IMR-90 (cell line): ENCODE measurements at regions of chr19 and their contacts with region 1.

Region 1: DNA sequence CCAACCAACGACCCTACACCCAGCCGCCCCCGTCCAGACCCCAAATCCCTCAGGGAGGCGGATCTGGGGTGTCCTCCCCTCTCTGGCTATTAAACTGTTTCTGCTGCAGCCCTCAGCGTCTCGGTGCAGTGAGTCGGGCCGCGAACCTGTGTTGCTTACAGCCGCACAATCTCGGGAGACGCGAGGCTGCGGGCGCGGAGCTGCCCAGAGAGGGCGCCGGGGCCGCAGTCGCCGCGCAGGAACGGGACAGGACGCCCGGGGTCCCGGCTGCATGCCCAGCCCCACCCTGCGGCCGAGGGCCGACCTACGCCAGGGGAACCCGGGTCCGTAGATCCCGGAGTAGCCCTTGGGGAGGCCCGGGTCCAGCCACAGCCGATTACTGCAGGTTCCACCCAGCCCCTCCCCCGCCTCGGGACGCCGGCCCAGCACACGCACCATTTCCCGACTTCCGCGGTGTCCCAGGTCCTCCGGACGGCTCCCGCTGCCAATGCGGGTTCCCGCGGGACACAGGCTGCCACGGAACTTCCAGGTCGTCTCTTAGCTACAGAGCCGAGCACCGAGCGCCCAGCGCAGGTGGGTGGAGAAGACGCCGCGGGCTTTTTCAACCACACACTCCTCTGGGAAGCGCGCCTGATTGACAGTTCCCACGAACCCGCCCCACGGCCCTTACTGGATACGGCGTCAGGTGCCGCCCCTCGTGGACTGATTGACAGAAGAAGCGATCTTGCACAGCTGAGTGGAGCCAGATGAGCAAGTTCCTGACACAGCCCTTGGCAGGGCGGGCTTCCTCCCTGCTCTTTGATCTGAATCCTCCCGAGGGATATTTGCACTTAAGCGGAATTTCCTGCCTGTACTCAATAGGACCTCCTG is at the start of gene ZNF799:
- DNase-seq: peak; percentile 95
- ATAC-seq: peak; percentile 97
- H3K4me3 ChIP-seq: peak within 1 kb of the TSS; percentile 97
- H3K27ac ChIP-seq: peak within 1 kb of the TSS; percentile 54
- H3K4me1 ChIP-seq: peaks cover 4% of the 10 kb centered on the region
- H3K27me3 ChIP-seq: no peaks in the 10 kb centered on the region
- CTCF ChIP-seq: 0 out of 2 replicates have a peak, but pooled peaks have one; percentile 3
- POLR2A ChIP-seq: no peak
- RAD21 ChIP-seq: no peak
- total RNA-seq, gene ZNF799: 3.4 and 3.6 TPM in 2 replicates

Region 2: GRCh38 chr19:12440541-12441316 is 39.9 kb after region 1 on chr19 and contains the start of gene ZNF443:
- CTCF ChIA-PET with region 1: no interaction called
- POLR2A ChIA-PET with region 1: no interaction called
- dilution Hi-C with region 1: no loop called
- in situ Hi-C with region 1: no loop called
- intact Hi-C with region 1: loop called (anchors 5 kb)
- DNase-seq: peak; percentile 95
- ATAC-seq: peak; percentile 99
- H3K4me3 ChIP-seq: peak within 1 kb of the TSS; percentile 56
- H3K27ac ChIP-seq: no peak within 1 kb of the TSS; the same call in 1 of the 2 replicates
- H3K4me1 ChIP-seq: no peaks in the 10 kb centered on the region
- H3K27me3 ChIP-seq: no peaks in the 10 kb centered on the region
- CTCF ChIP-seq: 0 out of 2 replicates have a peak, but pooled peaks have one; percentile 5
- POLR2A ChIP-seq: no peak
- RAD21 ChIP-seq: no peak
- total RNA-seq, gene ZNF443: 3.2 and 3.6 TPM in 2 replicates

Region 3: GRCh38 chr19:12544401-12544876 is 143.6 kb after region 1 on chr19:
- CTCF ChIA-PET with region 1: no interaction called
- POLR2A ChIA-PET with region 1: no interaction called
- dilution Hi-C with region 1: no loop called
- in situ Hi-C with region 1: no loop called
- intact Hi-C with region 1: no loop called
- DNase-seq: peak; percentile 19
- ATAC-seq: peak; percentile 21; the same call in 1 of the 2 replicates
- H3K4me3 ChIP-seq: no peak overlapping the region
- H3K27ac ChIP-seq: no peak overlapping the region
- H3K4me1 ChIP-seq: no peaks in the 10 kb centered on the region
- H3K27me3 ChIP-seq: no peaks in the 10 kb centered on the region
- CTCF ChIP-seq: no peak
- POLR2A ChIP-seq: no peak
- RAD21 ChIP-seq: no peak